ENCODE measurements at regions of chr9 and their contacts with region 1.

Region 1: GRCh38 chr9:79571309-79572031 is at the start of gene TLE4:
- H3K4me3 ChIP-seq: peak within 1 kb of the TSS; percentile 93
- H3K27ac ChIP-seq: peak within 1 kb of the TSS; percentile 81
- H3K4me1 ChIP-seq: no peaks in the 10 kb centered on the region
- CTCF ChIP-seq: no peak

Region 2: GRCh38 chr9:79256691-79257213 is 314.7 kb before region 1 on chr9:
- CTCF ChIA-PET with region 1: interaction called, 3 read pairs
- POLR2A ChIA-PET with region 1: interaction called, 43 read pairs
- H3K4me3 ChIP-seq: peak overlapping the region; percentile 42
- H3K27ac ChIP-seq: peak overlapping the region; percentile 47
- H3K4me1 ChIP-seq: no peaks in the 10 kb centered on the region
- CTCF ChIP-seq: no peak

Region 3: GRCh38 chr9:79583952-79584654 is 12.6 kb after region 1 on chr9:
- CTCF ChIA-PET with region 1: interaction called, 3 read pairs
- POLR2A ChIA-PET with region 1: interaction called, 24 read pairs
- H3K4me3 ChIP-seq: no peak overlapping the region
- H3K27ac ChIP-seq: no peak overlapping the region
- H3K4me1 ChIP-seq: no peaks in the 10 kb centered on the region
- CTCF ChIP-seq: no peak

Region 4: DNA sequence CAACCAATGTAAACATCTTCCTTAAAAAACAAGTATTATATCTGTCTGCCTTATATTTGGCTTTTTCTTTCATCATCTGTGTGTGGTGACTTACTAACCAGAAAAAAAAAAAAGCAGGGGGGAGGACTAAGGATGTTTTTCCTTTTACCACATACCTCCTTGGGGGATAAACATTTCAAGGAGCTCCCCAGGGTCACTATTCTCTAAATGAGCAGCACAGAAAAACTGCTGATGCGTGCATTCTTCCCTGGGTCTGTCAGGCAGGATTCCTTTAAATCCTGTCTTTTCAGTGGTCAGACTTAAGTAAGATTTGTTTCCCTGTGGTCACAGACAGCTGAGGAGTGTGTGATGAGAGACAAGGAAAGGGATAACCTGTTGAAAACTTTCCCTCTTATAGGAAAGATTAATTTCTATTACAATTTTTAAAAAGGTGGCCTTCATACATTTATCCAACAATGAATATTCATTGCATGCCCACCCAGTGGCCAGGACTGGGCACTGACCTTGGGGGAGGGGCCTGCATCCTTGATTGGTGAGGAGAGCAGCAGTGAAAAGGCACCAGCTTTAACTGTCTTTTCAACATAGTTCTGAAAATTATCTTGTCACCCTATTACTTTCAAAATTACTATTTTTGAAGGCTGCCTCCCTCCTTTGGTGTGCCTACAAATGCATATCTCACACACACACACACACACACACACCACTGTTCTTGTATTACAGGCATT is 123.4 kb after region 1 on chr9:
- CTCF ChIA-PET with region 1: interaction called, 3 read pairs
- POLR2A ChIA-PET with region 1: interaction called, 11 read pairs
- H3K4me3 ChIP-seq: no peak overlapping the region
- H3K27ac ChIP-seq: no peak overlapping the region
- H3K4me1 ChIP-seq: no peaks in the 10 kb centered on the region
- CTCF ChIP-seq: no peak

Region 5: DNA sequence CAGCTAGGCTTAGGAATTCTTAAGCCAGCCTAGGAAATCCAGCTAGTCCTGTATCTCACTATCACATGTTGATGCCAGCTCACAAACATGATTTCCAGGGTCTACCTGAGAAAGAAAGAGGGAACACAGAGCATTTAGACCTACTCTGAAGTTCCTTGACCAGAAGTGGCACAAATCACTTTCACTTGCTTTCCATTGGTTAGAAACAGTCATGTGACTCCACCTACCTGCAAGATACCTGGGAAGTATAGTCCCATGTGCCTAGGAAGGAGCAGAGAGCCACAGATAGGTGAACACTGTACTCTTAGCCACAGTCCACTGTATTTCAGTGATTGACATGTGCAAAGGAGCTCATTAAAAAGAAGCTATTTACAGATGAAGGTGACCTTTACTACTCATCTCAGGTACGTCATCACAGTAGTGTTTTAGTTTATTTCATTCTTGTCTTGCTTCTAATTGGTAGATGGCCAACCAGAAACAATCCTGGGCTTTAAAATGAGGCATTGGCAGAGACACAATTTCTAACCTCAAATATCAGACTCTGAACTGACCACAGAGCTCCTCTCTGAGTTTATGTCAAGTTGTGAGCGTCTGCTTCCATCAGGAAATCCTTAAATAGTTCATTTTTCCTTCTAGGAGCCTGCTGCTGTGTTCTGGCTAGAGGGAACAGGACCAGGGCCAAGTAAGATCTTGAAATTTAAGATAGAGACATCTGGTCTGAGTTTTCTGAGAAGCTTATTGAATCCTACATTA is 341.0 kb after region 1 on chr9:
- CTCF ChIA-PET with region 1: no interaction called
- POLR2A ChIA-PET with region 1: no interaction called
- H3K4me3 ChIP-seq: no peak overlapping the region
- H3K27ac ChIP-seq: no peak overlapping the region
- H3K4me1 ChIP-seq: no peaks in the 10 kb centered on the region
- CTCF ChIP-seq: no peak

Measured in HEK293 (cell line).